ENCODE measurements at regions of chr1 and their contacts with region 1.

Region 1: GRCh38 chr1:61049850-61050540 is 32.4 kb upstream of the NFIA start:
- DNase-seq: peak; percentile 86 to 92 (median 90)
- H3K4me3 ChIP-seq: peak overlapping the region; percentile 54 to 92 (median 81)
- H3K27ac ChIP-seq: peak overlapping the region; percentile 75 to 98 (median 94)
- H3K27me3 ChIP-seq: no peaks in the 10 kb centered on the region
- CTCF ChIP-seq: peak; percentile 90 to 99 (median 97)

Region 2: DNA sequence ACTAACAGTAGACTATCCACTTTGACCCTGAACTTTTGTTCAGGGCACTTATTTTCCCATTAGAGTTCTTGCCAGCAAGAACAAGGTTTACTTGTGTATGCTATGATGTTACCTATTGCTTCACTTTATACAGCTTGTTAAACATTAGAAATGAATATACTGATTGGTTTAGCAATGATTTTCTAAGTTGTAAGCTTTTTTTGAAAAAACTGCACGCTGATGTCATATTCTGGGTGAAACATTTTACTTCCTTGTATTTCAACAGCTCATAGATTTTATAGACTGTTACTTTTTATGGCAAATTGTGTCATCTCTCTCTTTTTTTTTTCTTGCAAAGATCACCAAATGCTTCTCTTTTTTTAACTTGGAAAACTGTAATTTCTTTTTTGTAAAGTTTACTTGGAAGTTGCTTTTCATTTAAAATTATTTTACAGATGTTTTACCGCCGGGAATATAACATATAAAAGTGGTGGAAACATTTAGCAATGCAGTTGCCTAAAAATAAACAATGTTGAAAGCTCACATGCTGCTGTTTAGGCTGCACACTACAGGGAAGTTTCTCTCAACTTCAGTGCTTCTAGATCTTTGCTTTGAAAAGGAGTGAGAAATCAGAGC is 183.0 kb before region 1 on chr1:
- intact Hi-C with region 1: loop called in 1 of 2 experiments (anchors 10 kb)
- DNase-seq: no peak
- H3K4me3 ChIP-seq: peak overlapping the region in 55 of 59 donors; percentile 5 to 57 (median 34)
- H3K27ac ChIP-seq: peak overlapping the region in 38 of 59 donors; percentile 13 to 78 (median 59)
- H3K27me3 ChIP-seq: peaks cover 0 to 70% (median 21%) of the 10 kb centered on the region in 45 donors
- CTCF ChIP-seq: no peak

Region 3: GRCh38 chr1:61184040-61184713 is 134.2 kb after region 1 on chr1:
- intact Hi-C with region 1: loop called (anchors 10 kb)
- DNase-seq: peak; percentile 86 to 97 (median 94)
- H3K4me3 ChIP-seq: peak overlapping the region; percentile 39 to 73 (median 56)
- H3K27ac ChIP-seq: peak overlapping the region; percentile 83 to 98 (median 96)
- H3K27me3 ChIP-seq: no peaks in the 10 kb centered on the region
- CTCF ChIP-seq: peak in 11 of 56 donors; percentile 1 to 19 (median 14)

Region 4: GRCh38 chr1:61337981-61338848 is 288.2 kb after region 1 on chr1:
- intact Hi-C with region 1: loop called (anchors 1 to 2 kb)
- DNase-seq: peak; percentile 46 to 89 (median 79)
- H3K4me3 ChIP-seq: peak overlapping the region in 54 of 59 donors; percentile 0 to 59 (median 26)
- H3K27ac ChIP-seq: peak overlapping the region; percentile 17 to 88 (median 74)
- H3K27me3 ChIP-seq: no peaks in the 10 kb centered on the region
- CTCF ChIP-seq: peak; percentile 66 to 95 (median 87)

Region 5: DNA sequence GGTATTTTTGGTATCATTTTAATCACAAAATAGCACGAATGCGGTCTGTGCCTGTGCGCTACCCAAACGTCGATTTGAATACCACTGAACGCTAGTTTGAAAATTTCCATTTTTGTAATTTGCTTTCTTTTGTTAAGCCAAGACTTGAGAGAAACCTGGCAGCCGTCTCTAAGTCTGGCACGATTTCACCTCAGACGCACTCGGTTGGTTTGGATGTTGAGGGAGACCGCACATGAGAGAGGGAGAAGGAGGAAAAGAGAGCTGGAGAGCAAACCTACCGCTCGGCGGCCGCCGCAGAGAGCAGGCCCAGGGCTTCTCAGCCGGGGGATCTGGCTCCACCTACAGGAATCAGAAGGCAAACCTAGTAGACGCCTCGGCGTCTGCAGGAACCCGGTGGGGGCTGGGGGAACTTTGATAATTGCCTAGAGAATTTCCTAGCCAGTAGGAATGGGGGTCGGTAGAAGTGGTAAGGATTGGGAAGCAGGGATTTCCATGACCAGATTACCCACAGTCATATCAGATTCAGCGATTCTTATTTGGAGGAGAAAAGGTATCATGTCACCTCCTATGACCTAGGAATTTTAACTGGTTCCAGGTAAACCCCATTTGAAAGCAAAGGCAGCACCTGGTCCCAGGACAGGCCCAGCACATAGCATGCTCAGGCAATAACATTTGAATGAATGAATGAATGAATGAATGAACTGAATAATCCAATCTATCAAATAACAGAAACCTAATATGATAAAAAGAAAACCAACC is 591.8 kb after region 1 on chr1:
- intact Hi-C with region 1: loop called (anchors 10 kb)
- DNase-seq: peak; percentile 54 to 84 (median 72)
- H3K4me3 ChIP-seq: peak overlapping the region in 50 of 59 donors; percentile 1 to 55 (median 32)
- H3K27ac ChIP-seq: peak overlapping the region in 42 of 59 donors; percentile 3 to 81 (median 51)
- H3K27me3 ChIP-seq: no peaks in the 10 kb centered on the region
- CTCF ChIP-seq: peak; percentile 39 to 87 (median 76)

Region 6: DNA sequence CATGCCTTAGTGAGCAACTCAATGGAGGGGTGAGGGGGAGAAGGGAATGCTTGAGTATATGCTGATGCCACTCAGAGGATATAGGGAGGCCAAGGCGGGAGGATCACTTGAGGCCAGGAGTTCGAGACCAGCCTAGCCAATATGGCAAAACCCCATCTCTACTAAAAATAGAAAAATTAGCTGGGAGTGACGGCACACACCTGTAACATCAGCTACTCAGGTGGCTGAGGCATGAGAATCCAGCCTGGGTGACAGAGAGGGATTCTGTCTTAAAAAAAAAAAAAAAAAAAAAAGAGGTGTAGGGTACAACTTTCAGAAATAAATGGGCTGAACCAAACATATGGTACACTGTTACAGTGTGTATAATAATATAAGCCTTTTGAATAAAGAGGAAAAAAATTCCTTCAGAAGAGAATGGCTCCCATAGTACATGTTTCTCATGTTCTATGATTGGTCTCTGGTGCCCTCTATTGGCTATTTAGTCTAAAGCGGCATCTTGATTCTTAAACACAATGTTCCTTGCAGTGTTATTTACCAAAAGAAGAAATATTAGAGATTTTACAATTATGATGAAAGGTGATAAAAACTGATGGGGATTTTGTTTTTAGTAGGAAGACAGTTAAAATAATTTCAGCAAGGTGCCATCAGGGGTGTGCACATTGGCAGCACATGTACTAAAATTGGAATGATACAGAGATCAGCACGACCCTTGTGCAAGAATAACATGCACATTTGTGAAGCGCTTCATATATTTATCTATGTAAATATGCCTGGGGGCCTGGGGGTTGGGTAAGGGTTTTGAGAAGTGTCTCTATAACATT is 802.1 kb after region 1 on chr1:
- intact Hi-C with region 1: loop called (anchors 5 to 10 kb)
- DNase-seq: no peak
- H3K4me3 ChIP-seq: no peak overlapping the region
- H3K27ac ChIP-seq: peak overlapping the region in 23 of 59 donors; percentile 3 to 69 (median 38)
- H3K27me3 ChIP-seq: no peaks in the 10 kb centered on the region
- CTCF ChIP-seq: peak; percentile 51 to 90 (median 74)

Measured in dorsolateral prefrontal cortex (tissue), 120 donors.